PC-9 (cell line): ENCODE measurements at regions of chr3 and their contacts with region 1.

Region 1: GRCh38 chr3:11379233-11379823 is 107.1 kb downstream of the ATG7 start:
- DNase-seq: peak in 1 of 2 experiments; percentile 13
- H3K4me3 ChIP-seq: no peak overlapping the region
- H3K27ac ChIP-seq: no peak overlapping the region
- H3K4me1 ChIP-seq: peaks cover 7% of the 10 kb centered on the region
- H3K27me3 ChIP-seq: no peaks in the 10 kb centered on the region
- CTCF ChIP-seq: peak; percentile 82

Region 2: GRCh38 chr3:11643605-11644087 is 264.3 kb after region 1 on chr3 and contains the start of gene VGLL4:
- CTCF ChIA-PET with region 1: interaction called, 11 read pairs
- POLR2A ChIA-PET with region 1: no interaction called
- intact Hi-C with region 1: no loop called
- DNase-seq: peak; percentile 71 to 73
- H3K4me3 ChIP-seq: peak within 1 kb of the TSS; percentile 77
- H3K27ac ChIP-seq: peak within 1 kb of the TSS; percentile 66
- H3K4me1 ChIP-seq: peaks cover 25% of the 10 kb centered on the region
- H3K27me3 ChIP-seq: no peaks in the 10 kb centered on the region
- CTCF ChIP-seq: no peak
- total RNA-seq, gene VGLL4: 39.1 and 42.2 TPM in 2 replicates

Region 3: DNA sequence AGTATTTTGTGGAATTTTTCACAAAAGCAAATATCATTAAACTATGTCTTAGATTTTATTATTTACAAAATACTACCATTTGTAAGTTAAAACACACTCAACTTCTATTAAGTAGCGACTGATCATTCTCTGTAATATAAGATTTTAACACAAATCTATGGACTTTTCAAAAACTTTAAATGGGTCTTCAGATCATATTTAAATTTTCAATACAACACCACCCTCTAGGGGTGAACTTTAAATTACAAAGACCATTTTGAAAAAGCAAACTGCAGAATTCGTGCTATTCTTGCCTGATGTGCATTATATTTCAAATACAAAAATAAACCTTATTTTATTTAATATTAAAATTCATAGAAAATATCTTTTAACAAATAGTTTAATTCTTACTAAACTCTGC is 272.6 kb after region 1 on chr3:
- CTCF ChIA-PET with region 1: interaction called, 9 read pairs
- POLR2A ChIA-PET with region 1: no interaction called
- intact Hi-C with region 1: loop called (anchors 2 kb)
- DNase-seq: no peak
- H3K4me3 ChIP-seq: no peak overlapping the region
- H3K27ac ChIP-seq: no peak overlapping the region
- H3K4me1 ChIP-seq: no peaks in the 10 kb centered on the region
- H3K27me3 ChIP-seq: no peaks in the 10 kb centered on the region
- CTCF ChIP-seq: peak; percentile 80

Region 4: GRCh38 chr3:11803977-11804892 is 424.9 kb after region 1 on chr3:
- CTCF ChIA-PET with region 1: no interaction called
- POLR2A ChIA-PET with region 1: no interaction called
- intact Hi-C with region 1: loop called (anchors 1 kb)
- DNase-seq: peak; percentile 15 to 44
- H3K4me3 ChIP-seq: no peak overlapping the region
- H3K27ac ChIP-seq: no peak overlapping the region
- H3K4me1 ChIP-seq: peaks cover 2% of the 10 kb centered on the region; the same call in 1 of the 2 replicates
- H3K27me3 ChIP-seq: no peaks in the 10 kb centered on the region
- CTCF ChIP-seq: peak; percentile 84

Region 5: DNA sequence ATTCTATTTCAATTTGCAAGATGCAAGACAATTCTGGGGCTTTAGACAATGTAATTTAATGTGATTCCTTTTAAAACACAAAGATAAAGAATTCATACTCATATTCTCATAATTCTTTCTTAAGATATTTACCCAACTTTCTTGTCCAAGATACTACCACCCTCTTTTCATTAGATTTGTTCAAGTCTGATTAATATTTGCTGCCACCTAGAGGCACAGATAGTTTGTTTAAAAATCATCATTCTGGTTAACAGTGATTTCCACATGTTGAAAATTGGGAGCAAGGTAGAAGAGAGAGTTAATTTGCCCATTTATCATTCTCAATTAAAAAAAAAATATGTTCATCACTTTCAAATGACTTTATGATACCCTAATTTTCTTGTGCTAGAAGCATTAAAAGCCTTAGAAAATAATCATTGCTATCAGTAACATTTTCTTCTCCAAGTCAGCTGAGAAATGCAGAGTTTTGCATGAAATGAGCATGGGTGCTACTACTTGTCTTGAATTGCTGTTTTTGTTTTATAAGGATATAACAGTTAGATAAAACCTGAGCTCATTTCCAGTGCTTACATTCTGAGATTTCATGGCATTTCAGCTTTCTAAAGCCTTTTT is 455.8 kb after region 1 on chr3:
- CTCF ChIA-PET with region 1: no interaction called
- POLR2A ChIA-PET with region 1: no interaction called
- intact Hi-C with region 1: loop called (anchors 10 kb)
- DNase-seq: no peak
- H3K4me3 ChIP-seq: no peak overlapping the region
- H3K27ac ChIP-seq: no peak overlapping the region
- H3K4me1 ChIP-seq: no peaks in the 10 kb centered on the region
- H3K27me3 ChIP-seq: no peaks in the 10 kb centered on the region
- CTCF ChIP-seq: peak; percentile 75